ENCODE measurements at regions of chr2 and their contacts with region 1.

Region 1: GRCh38 chr2:64653349-64654062 is at the start of gene SERTAD2:
- DNase-seq: peak; percentile 95
- CTCF ChIP-seq: no peak

Region 2: GRCh38 chr2:63692002-63692606 is 961.4 kb before region 1 on chr2:
- CTCF ChIA-PET with region 1: no interaction called
- POLR2A ChIA-PET with region 1: no interaction called
- DNase-seq: peak; percentile 41
- CTCF ChIP-seq: peak; percentile 41

Region 3: DNA sequence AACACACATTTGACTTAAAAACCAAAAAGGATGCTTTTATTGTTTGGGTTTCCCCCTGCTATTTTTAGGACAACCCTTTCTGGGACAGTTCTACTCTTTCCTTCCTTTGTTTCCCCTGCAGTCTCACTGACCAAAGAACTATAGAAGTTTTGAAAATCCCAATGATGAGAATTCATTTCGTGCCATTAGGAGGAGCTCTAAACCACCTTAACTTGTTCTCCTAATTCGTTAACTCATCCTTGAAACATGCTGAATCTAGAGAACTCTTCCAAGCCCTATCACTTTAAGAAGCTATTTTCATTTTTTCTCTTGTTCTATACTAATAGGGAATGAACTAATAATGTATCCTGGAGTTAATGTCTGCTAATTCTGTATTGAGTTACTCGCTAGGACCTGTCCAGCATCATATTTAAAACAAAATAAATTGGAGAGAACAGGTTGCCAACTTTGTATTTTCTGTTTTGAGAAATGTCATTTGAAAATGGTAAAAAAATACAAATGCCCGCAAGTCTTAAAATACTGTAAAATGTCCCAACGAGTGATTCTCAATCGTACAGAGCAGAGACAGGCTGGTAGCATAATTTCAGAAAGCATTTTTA is 66.5 kb before region 1 on chr2:
- CTCF ChIA-PET with region 1: interaction called, 11 read pairs
- POLR2A ChIA-PET with region 1: no interaction called
- DNase-seq: peak; percentile 37
- CTCF ChIP-seq: peak; percentile 55

Region 4: GRCh38 chr2:64635976-64636911 is 17.3 kb before region 1 on chr2:
- CTCF ChIA-PET with region 1: interaction called, 94 read pairs
- POLR2A ChIA-PET with region 1: no interaction called
- DNase-seq: peak; percentile 67
- CTCF ChIP-seq: peak; percentile 15

Region 5: DNA sequence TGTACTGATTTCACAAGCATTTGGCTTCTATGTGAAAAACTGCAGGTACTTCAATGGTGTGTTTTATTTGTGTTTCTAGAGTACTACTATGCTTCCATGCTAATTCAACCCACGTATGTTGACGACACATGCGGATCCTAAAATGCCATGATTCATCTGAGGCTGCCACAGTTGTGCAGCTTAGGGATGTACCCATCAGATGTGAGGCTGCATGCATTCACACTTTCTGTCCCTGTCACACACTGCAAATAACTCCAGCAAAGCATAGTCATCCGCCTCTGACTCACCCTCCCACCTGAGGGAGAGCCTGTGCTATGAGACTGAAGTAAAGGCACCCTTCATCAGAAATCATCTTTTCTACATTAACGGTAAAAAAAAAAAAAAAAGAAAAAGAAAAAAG is 22.4 kb after region 1 on chr2:
- CTCF ChIA-PET with region 1: interaction called, 28 read pairs
- POLR2A ChIA-PET with region 1: interaction called, 8 read pairs
- DNase-seq: no peak
- CTCF ChIP-seq: no peak

Region 6: DNA sequence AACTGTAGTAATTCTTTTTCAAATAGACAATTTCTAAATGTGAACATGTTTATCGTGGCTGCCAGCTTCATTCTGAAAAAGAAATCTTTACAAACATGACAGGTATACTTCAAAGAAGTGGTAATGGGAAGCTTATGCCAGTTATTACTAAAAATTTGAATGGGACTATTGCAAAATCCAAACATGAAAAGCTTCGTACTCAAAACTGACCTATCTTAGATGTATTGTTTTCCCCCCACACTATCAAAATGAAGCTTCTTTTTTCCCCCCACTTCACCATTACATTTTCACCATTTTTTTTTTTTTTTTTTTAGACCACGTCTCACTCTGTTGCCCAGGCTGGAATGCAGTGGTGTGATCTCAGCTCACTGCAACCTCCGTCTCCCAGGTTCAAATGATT is 50.7 kb after region 1 on chr2:
- CTCF ChIA-PET with region 1: interaction called, 15 read pairs
- POLR2A ChIA-PET with region 1: interaction called, 7 read pairs
- DNase-seq: no peak
- CTCF ChIP-seq: no peak

Region 7: GRCh38 chr2:64864674-64865072 is 211.2 kb after region 1 on chr2:
- CTCF ChIA-PET with region 1: interaction called, 31 read pairs
- POLR2A ChIA-PET with region 1: interaction called, 5 read pairs
- DNase-seq: peak; percentile 51
- CTCF ChIP-seq: no peak

Region 8: DNA sequence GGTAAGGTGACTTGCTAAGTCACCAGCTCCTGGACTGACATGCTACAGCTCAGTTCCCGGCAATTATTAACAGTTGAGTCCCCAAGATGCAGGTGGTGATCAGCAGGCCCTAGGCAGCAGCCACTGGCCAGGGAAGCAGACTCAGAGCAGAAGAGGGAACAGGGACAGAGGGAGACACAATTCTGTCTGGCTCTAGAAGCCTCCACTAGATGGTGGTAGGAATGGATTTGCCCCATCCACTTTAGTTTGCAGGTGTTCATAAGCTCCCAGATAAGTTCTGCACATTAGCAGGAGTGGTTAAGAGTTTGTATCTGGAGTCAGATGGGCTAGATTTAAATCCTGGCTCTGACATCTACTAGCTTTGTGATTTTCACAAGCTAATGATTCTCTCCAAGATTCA is 310.2 kb after region 1 on chr2:
- CTCF ChIA-PET with region 1: no interaction called
- POLR2A ChIA-PET with region 1: no interaction called
- DNase-seq: no peak
- CTCF ChIP-seq: no peak

Measured in GM10248 (cell line).